Activated CD8-positive, alpha-beta T cell treated with anti-CD3 and anti-CD28 coated beads for 36 hours (primary cell): ENCODE measurements at regions of chr11 and their contacts with region 1.

Region 1: GRCh38 chr11:12224537-12224893 is 114.1 kb downstream of the MICAL2 start:
- DNase-seq: peak; percentile 99
- ATAC-seq: peak; percentile 96
- H3K4me3 Mint-ChIP-seq: peak overlapping the region; percentile 68
- H3K27ac Mint-ChIP-seq: peak overlapping the region; percentile 94
- H3K4me1 Mint-ChIP-seq: peaks cover 46% of the 10 kb centered on the region
- H3K27me3 Mint-ChIP-seq: no peaks in the 10 kb centered on the region
- CTCF ChIP-seq: no peak

Region 2: DNA sequence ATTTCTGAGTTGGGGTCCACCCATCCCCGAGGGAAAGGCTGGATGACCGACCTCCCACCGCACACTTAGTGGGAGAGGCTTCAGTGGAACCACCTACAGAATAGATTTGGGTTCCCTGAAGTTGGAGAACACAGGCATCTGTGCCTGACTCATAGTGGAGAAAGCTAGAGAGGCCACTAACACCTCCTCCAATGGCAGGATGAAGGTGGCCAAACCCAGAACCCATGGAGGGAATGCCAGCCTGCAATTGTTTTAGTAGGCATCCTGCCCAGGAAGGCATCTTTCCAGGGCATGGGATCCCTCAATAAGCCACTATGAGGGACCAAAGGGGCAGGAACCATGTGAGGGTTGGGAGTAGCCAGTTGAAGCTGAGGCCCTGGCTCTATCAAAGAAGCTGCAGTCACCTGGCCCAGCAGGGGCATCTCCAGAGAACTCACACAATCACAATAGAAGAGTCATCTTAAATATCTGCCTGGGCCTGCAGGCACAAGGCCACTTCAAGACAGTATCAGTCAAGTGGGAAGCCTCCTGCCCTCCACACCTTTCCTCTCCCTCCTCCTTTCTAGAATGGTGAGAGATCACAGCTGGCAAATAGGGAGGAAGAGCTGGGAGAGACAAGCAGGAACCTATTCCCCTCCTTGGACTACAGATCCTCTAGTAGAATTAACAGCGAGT is 747.4 kb before region 1 on chr11:
- CTCF ChIA-PET with region 1: no interaction called
- POLR2A ChIA-PET with region 1: no interaction called
- intact Hi-C with region 1: no loop called
- DNase-seq: no peak
- ATAC-seq: no peak
- H3K4me3 Mint-ChIP-seq: no peak overlapping the region
- H3K27ac Mint-ChIP-seq: no peak overlapping the region
- H3K4me1 Mint-ChIP-seq: no peaks in the 10 kb centered on the region
- H3K27me3 Mint-ChIP-seq: peaks cover 2% of the 10 kb centered on the region
- CTCF ChIP-seq: no peak

Region 3: GRCh38 chr11:12079726-12080556 is 144.6 kb before region 1 on chr11:
- CTCF ChIA-PET with region 1: no interaction called
- POLR2A ChIA-PET with region 1: no interaction called
- intact Hi-C with region 1: no loop called
- DNase-seq: no peak
- ATAC-seq: no peak
- H3K4me3 Mint-ChIP-seq: no peak overlapping the region
- H3K27ac Mint-ChIP-seq: no peak overlapping the region
- H3K4me1 Mint-ChIP-seq: peaks cover 7% of the 10 kb centered on the region
- H3K27me3 Mint-ChIP-seq: no peaks in the 10 kb centered on the region
- CTCF ChIP-seq: no peak

Region 4: GRCh38 chr11:12200279-12201010 is 24.1 kb before region 1 on chr11:
- CTCF ChIA-PET with region 1: interaction called, 8 read pairs
- POLR2A ChIA-PET with region 1: interaction called, 24 read pairs
- intact Hi-C with region 1: no loop called
- DNase-seq: peak; percentile 39
- ATAC-seq: no peak
- H3K4me3 Mint-ChIP-seq: no peak overlapping the region
- H3K27ac Mint-ChIP-seq: peak overlapping the region; percentile 44
- H3K4me1 Mint-ChIP-seq: peaks cover 80% of the 10 kb centered on the region
- H3K27me3 Mint-ChIP-seq: no peaks in the 10 kb centered on the region
- CTCF ChIP-seq: no peak

Region 5: GRCh38 chr11:12303421-12304149 is 79.1 kb after region 1 on chr11:
- CTCF ChIA-PET with region 1: no interaction called
- POLR2A ChIA-PET with region 1: no interaction called
- intact Hi-C with region 1: no loop called
- DNase-seq: no peak
- ATAC-seq: no peak
- H3K4me3 Mint-ChIP-seq: no peak overlapping the region
- H3K27ac Mint-ChIP-seq: no peak overlapping the region
- H3K4me1 Mint-ChIP-seq: no peaks in the 10 kb centered on the region
- H3K27me3 Mint-ChIP-seq: no peaks in the 10 kb centered on the region
- CTCF ChIP-seq: no peak

Region 6: GRCh38 chr11:12841946-12842630 is 617.6 kb after region 1 on chr11:
- CTCF ChIA-PET with region 1: no interaction called
- POLR2A ChIA-PET with region 1: no interaction called
- intact Hi-C with region 1: no loop called
- DNase-seq: peak; percentile 3
- ATAC-seq: no peak
- H3K4me3 Mint-ChIP-seq: no peak overlapping the region
- H3K27ac Mint-ChIP-seq: no peak overlapping the region
- H3K4me1 Mint-ChIP-seq: peaks cover 2% of the 10 kb centered on the region
- H3K27me3 Mint-ChIP-seq: peaks cover 13% of the 10 kb centered on the region
- CTCF ChIP-seq: no peak